GM10248 (cell line): ENCODE measurements at regions of chr17 and their contacts with region 1.

Region 1: GRCh38 chr17:75652915-75653549 is 13.9 kb downstream of the RECQL5 start:
- DNase-seq: peak; percentile 58
- CTCF ChIP-seq: peak; percentile 69

Region 2: GRCh38 chr17:75667021-75667790 is 14.2 kb after region 1 on chr17 and contains the starts of genes RECQL5 and SAP30BP:
- CTCF ChIA-PET with region 1: interaction called, 13 read pairs
- POLR2A ChIA-PET with region 1: no interaction called
- DNase-seq: peak; percentile 94
- CTCF ChIP-seq: no peak

Region 3: GRCh38 chr17:75731716-75732498 is 78.9 kb after region 1 on chr17:
- CTCF ChIA-PET with region 1: no interaction called
- POLR2A ChIA-PET with region 1: no interaction called
- DNase-seq: no peak
- CTCF ChIP-seq: no peak